Right ventricle myocardium superior (tissue), 1 donor: ENCODE measurements at regions of chr14 and their contacts with region 1.

Region 1: DNA sequence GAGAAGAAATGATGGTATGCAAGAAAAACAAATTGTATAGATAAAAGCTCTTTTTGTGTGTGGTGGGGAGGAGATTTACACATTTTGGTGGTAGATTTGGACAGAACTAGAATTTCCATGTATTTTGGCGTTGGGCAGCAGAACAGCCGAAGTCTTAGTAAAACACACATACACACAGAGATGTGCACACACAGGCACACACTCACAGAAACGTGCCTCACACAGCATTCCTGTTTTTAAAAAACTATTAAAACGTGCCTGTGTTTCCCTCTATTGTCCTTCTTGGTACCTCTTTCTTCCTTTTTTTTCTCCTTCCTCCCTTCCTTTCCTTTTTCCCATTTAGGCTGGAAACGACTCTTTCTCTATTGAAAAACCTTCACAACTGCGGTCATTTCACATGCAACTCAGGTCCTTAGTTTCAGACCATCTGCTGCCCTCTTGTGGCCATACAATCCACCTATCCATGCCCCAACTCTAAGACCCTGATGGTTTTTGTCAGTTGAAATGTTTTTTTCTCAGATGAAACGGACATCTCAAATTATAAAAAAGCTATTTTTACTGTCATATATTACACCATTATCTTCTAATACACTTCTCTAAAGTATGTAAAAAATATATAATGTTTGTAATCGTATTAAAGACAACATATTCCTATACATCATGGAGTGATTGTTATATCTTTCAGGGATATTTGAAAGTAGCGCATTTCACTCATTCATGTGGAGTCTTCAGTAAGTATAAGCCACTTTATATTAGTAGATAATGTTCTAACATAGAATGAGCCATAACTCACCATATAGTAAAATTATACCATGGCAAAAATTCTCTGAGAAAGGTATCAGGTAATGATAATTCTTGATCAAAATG is 386.7 kb upstream of the NOVA1 start:
- DNase-seq: peak; percentile 40
- ATAC-seq: peak; percentile 77

Region 2: GRCh38 chr14:26394150-26394810 is 590.3 kb before region 1 on chr14:
- intact Hi-C with region 1: loop called (anchors 10 kb)
- DNase-seq: no peak
- ATAC-seq: peak; percentile 82

Region 3: DNA sequence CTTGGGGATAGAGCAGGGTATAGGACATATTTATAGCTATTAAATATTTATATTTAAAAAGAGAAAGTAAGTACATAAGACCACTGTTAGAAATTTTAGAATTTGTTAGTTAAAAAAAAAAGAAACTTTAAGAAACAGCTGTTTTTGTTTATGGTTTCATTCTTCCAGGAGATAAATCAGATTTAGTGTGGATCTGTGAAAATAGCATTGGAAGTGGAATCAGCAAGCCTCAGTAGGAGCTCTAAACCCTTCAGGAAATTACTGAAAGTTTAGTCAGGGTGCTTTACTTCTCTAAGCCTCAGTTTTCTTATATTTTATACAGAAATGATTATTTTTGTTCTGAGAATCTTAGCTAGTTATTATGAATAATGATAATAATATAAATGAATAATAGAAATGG is 70.8 kb before region 1 on chr14:
- intact Hi-C with region 1: no loop called
- DNase-seq: no peak
- ATAC-seq: no peak

Region 4: GRCh38 chr14:27392153-27392552 is 407.6 kb after region 1 on chr14:
- intact Hi-C with region 1: no loop called
- DNase-seq: no peak
- ATAC-seq: no peak